HAP-1 (cell line): ENCODE measurements at regions of chr3 and their contacts with region 1.

Region 1: GRCh38 chr3:86774082-86774691 is 216.8 kb downstream of the VGLL3 start:
- DNase-seq: peak in 1 of 2 experiments; percentile 62
- H3K4me3 ChIP-seq: no peak overlapping the region
- H3K4me1 ChIP-seq: no peaks in the 10 kb centered on the region
- H3K27me3 ChIP-seq: no peaks in the 10 kb centered on the region

Region 2: DNA sequence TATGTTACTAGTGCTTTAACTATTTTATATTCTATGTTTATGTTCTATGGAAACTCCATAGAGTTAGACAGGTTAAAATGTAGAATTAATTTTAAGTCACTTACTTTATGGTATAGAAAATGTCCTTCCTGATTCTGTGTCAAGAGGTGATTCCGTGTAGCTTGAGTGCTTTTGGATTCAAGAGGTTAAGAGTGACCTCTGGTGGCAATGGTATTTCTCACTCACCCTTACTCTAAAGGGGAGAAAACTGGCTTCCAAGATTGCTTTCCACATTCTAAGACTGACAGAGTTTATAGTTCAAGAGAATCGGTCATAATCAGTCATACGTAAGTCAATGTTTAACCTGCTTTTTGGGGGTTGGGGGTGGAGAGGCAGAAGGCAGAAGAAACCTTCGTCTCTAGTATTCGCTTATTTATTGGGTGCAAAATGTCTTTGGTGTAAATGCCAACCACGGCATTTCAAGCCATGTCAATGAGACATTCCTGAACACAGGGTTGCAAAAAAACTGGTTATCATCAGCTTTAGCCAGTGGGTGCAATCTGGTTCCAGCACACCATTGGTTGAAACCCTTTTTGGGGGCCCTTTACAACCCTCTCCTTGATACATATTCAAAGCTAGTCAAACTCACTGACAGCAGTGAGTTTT is 308.7 kb after region 1 on chr3:
- in situ Hi-C with region 1: loop called (anchors 10 kb)
- DNase-seq: peak; percentile 52 to 66
- H3K4me3 ChIP-seq: no peak overlapping the region
- H3K4me1 ChIP-seq: peaks cover 3% of the 10 kb centered on the region; the same call in 1 of the 2 replicates
- H3K27me3 ChIP-seq: no peaks in the 10 kb centered on the region